HepG2 (cell line): ENCODE measurements at regions of chr20 and their contacts with region 1.

Region 1: DNA sequence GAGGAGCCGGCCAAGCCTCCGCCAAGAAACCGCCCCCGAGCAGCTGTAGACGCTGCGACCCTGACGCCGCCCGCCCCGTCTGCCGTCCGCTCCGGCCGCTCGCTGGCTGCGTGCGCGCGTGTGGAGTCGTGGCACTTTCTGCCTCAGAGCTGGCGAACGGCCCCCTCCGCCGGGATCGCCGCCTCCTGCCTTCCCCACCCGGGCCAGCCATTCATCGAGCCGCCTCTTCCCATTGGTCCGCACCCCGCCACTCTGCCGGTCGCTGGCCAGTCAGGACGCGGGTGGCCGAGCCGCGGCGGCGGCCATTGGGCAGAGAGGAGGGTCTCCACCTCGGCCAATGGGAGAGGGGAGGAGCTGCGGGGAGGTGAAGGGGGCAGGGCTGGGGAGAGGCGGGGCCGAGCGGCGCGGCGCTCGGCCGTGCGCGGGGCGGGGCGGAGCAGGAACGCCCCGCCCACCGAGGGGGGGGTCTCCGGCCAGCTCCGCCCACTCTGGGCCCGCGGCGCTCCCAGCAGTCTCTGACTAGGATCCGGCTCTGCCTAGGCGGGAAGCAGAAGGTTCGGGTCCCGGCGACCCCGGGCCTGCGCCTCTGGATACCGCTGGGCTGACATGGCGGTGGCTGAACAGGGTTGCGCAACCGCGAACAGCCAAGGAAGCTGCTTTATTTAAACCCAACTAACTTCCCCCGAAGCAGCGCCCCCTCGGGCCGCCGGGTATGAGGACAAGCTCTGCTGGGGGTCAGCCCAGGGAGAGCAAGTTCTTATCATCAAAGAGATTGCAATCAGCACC is at the start of gene RRBP1:
- DNase-seq: peak; percentile 98
- ATAC-seq: peak; percentile 90
- H3K4me3 ChIP-seq: peak within 1 kb of the TSS; percentile 87 to 92 (median 92)
- H3K27ac ChIP-seq: peak within 1 kb of the TSS; percentile 87
- H3K4me1 ChIP-seq: peaks cover 59% of the 10 kb centered on the region
- H3K27me3 ChIP-seq: peaks cover 0 to 18% of the 10 kb centered on the region in 2 experiments; a peak in 4 of 5 replicates
- CTCF ChIP-seq: peak; percentile 89
- EP300 ChIP-seq: peak; percentile 51 to 93
- POLR2A ChIP-seq: peak; percentile 98 to 99
- RAD21 ChIP-seq: peak; percentile 92
- total RNA-seq, gene RRBP1: 97.1 and 222 TPM in 2 replicates

Region 2: GRCh38 chr20:16729565-16730456 is 952.5 kb before region 1 on chr20 and contains the start of gene SNRPB2:
- CTCF ChIA-PET with region 1: no interaction called
- POLR2A ChIA-PET with region 1: no interaction called
- in situ Hi-C with region 1: no loop called
- intact Hi-C with region 1: no loop called
- DNase-seq: peak; percentile 97
- ATAC-seq: peak; percentile 98
- H3K4me3 ChIP-seq: peak within 1 kb of the TSS; percentile 82 to 98 (median 92)
- H3K27ac ChIP-seq: peak within 1 kb of the TSS; percentile 79
- H3K4me1 ChIP-seq: peaks cover 29% of the 10 kb centered on the region
- H3K27me3 ChIP-seq: peaks cover 0 to 12% of the 10 kb centered on the region in 2 experiments; a peak in 3 of 5 replicates
- CTCF ChIP-seq: peak; percentile 35
- EP300 ChIP-seq: peak; percentile 66 to 75; a peak in 3 of 4 replicates
- POLR2A ChIP-seq: peak; percentile 97 to 98
- RAD21 ChIP-seq: peak; percentile 74
- total RNA-seq, gene SNRPB2: 204 and 278 TPM in 2 replicates

Region 3: DNA sequence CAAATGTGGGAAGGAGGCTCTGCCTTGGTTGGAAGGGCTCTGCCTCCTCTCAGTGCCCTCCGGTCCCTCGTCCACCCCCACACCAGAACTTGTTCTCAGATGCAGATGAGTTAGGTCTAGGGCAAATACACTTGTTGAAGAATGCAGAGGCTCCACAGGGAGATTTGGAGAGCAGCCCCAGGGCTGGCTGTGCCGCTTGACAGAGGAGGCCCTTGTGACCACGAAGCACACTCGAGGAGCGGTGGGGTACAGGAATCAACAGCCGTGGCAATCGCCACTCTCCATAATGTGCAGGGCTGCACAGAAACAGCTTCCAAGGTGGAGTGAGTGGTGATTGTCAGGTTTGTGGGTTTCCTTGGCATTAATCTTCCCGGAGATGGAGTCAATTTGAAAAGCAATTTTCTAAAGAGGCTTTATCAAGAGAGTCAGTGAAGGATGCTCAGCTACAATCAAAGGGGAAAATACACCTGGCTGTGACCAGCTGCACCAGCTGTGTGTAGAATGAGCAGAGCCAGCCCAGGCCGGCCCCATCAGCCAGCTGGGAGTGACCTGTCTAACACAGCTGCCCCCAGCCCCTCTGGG is 210.6 kb before region 1 on chr20:
- CTCF ChIA-PET with region 1: no interaction called
- POLR2A ChIA-PET with region 1: no interaction called
- in situ Hi-C with region 1: no loop called
- intact Hi-C with region 1: no loop called
- DNase-seq: no peak
- ATAC-seq: peak; percentile 27
- H3K4me3 ChIP-seq: no peak overlapping the region
- H3K27ac ChIP-seq: no peak overlapping the region
- H3K4me1 ChIP-seq: no peaks in the 10 kb centered on the region
- H3K27me3 ChIP-seq: peaks cover 10 to 48% of the 10 kb centered on the region in 2 experiments; a peak in 4 of 5 replicates
- CTCF ChIP-seq: no peak
- EP300 ChIP-seq: no peak
- POLR2A ChIP-seq: no peak
- RAD21 ChIP-seq: no peak

Region 4: DNA sequence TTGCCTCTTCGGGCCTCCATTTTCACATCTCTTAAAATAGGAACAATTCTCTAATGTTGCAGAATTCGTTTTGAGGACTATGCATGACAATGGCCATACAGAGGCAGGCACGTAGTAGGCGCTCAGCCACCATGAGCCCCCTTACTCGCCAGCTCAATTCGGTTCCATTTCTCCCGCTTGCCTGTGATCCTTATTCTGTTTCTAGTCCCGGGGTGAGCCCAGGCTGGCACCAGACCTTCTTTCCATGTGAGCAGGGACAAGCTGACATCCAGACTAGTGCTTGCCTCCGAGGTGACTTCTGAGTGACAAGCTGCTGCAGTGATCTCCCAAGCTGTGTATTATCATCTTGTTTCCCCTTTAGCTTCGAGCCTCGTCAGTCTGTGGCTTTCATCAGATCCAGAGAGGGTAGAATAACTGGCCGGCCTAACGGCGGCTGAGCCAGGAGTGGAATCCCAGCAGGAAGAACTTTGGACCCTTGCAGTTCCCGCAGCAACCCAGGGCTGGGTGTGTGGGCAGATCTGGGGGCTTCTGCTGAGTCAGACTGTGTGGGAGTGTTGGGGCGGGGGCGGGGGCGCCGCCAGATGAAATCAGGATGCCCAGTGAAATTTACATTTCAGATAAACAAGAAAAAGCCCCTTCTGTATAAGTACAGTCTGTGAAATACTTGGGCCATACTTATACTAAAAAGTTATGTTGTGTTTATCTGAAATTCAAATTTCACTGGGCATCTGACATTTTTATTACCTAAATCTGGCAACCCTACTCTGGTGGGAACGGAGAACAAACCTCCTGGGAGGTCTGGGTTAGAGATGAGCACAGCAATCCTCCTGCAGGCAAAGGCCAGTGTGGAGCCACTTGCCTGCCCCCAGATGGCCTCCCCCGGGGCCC is 28.3 kb after region 1 on chr20:
- CTCF ChIA-PET with region 1: no interaction called
- POLR2A ChIA-PET with region 1: interaction called, 126 read pairs
- in situ Hi-C with region 1: no loop called
- intact Hi-C with region 1: loop called (anchors 1 kb)
- DNase-seq: peak; percentile 92
- ATAC-seq: peak; percentile 93
- H3K4me3 ChIP-seq: peak overlapping the region; percentile 36 to 70 (median 54)
- H3K27ac ChIP-seq: peak overlapping the region; percentile 43
- H3K4me1 ChIP-seq: peaks cover 75% of the 10 kb centered on the region
- H3K27me3 ChIP-seq: peaks cover 2 to 23% of the 10 kb centered on the region in 2 experiments; a peak in 2 of 5 replicates
- CTCF ChIP-seq: 0 out of 2 replicates have a peak, but pooled peaks have one; percentile 6
- EP300 ChIP-seq: peak in 1 of 2 experiments; percentile 66; a peak in 2 of 4 replicates
- POLR2A ChIP-seq: peak; percentile 59 to 61; a peak in 3 of 4 replicates
- RAD21 ChIP-seq: peak; percentile 31; the same call in 1 of the 2 replicates

Region 5: DNA sequence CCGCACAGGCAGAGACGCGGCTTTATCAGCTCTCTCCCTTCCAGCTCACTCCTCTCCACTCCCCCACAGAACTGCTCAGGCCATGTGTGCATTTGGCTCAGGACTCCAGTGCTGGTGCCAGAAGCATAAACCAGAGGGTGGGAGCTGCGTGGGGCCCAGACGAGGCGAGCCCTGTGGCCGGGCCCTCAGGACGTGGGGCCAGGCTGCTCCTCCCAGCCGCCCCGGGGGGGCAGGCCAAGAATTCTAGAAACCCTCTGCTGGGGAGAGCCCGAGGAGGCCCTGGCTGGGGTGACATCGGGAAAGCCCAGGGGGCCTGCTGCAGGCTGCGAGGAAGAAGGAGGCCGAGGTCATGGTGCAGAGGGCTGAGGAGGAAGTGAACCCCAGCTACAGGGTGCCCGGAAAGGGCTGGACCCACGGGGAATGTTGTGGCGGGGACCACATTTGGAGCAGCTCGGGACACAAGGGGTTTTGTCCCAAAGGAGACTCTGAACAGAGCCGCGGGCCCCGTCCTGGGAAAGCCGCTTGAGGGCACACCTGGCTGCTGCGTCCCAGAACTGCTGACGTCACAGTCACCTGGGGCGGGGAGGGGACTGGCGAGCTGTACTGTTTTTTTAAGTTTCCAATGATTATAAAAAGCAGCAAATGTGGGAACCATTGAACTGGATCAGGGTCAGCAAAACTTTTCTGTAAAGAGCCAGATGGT is 124.6 kb after region 1 on chr20:
- CTCF ChIA-PET with region 1: no interaction called
- POLR2A ChIA-PET with region 1: interaction called, 13 read pairs
- in situ Hi-C with region 1: no loop called
- intact Hi-C with region 1: loop called (anchors 5 kb)
- DNase-seq: no peak
- ATAC-seq: peak; percentile 24
- H3K4me3 ChIP-seq: peak overlapping the region in 2 of 3 experiments; percentile 16 to 49; a peak in 1 of 6 replicates
- H3K27ac ChIP-seq: no peak overlapping the region
- H3K4me1 ChIP-seq: peaks cover 83% of the 10 kb centered on the region
- H3K27me3 ChIP-seq: peaks cover 0 to 1% of the 10 kb centered on the region in 2 experiments; a peak in 2 of 5 replicates
- CTCF ChIP-seq: peak; percentile 54
- EP300 ChIP-seq: no peak
- POLR2A ChIP-seq: no peak
- RAD21 ChIP-seq: no peak

Region 6: DNA sequence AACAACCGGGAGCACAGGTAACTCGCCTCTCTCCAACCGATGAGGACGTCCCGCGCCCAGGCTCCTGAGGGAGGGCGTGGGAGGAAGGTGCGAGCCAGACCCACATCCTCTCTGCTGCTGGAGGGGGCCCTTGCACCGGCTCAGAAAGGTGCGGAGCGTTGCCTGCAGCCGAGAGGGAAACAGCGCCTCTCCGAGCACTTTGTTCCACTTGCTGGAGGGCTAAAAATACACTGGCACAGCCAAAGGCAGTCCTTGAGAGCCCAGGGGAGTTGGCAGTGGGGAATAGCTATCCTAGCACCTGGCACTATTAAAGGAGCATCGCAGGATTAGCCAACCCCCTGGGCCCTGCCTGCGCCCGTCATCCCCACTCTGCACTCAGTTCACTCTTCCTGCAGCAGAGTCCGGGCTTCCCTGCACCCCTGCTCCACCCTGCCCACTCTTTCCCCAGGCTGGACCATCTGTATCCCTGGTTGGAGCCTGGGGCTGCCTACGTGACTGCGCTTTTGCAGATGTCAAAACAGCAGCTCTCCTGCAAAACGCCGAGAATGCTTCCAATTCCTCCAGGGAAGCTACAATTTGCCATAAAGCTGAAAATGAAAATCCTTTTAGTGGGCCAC is 177.4 kb after region 1 on chr20:
- CTCF ChIA-PET with region 1: no interaction called
- POLR2A ChIA-PET with region 1: interaction called, 347 read pairs
- in situ Hi-C with region 1: no loop called
- intact Hi-C with region 1: loop called (anchors 1 kb)
- DNase-seq: no peak
- ATAC-seq: no peak; the same call in 1 of the 3 replicates
- H3K4me3 ChIP-seq: peak overlapping the region in 1 of 3 experiments; percentile 17; a peak in 2 of 6 replicates
- H3K27ac ChIP-seq: peak overlapping the region; percentile 86
- H3K4me1 ChIP-seq: peaks cover 100% of the 10 kb centered on the region
- H3K27me3 ChIP-seq: no peaks in the 10 kb centered on the region
- CTCF ChIP-seq: peak; percentile 53
- EP300 ChIP-seq: no peak
- POLR2A ChIP-seq: no peak
- RAD21 ChIP-seq: peak; percentile 34; the same call in 1 of the 2 replicates

Region 7: DNA sequence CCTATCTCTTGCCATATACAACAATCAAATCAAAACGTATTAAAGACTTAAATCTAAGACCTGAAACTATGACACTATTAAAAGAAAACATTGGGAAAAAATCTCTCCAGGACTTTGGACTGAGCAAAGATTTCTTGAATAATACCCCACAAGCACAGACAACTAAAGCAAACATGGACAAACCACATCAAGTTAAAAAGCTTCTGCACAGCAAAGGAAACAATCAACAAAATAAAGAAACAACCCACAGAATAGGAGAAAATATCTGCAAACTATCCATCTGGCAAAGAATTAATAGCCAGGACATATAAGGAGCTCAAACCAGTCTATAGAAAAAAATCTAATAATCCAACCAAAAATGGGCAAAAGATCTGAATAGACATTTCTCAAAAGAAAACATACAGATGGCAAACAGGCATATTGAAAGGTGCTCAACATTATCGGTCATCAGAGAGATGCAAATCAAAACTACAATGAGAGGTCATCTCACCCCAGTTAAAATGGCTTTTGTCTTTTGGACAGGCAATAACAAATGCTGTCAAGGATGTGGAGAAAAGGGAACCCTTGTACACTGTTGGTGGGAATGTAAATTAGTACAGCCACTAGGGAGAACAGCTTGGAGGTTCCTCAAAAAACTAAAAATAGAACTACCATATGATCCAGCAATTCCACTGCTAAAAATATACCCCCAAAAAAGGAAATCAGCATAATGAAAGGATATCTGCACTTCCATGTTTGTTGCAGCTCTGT is 210.1 kb after region 1 on chr20:
- CTCF ChIA-PET with region 1: interaction called, 29 read pairs
- POLR2A ChIA-PET with region 1: interaction called, 80 read pairs
- in situ Hi-C with region 1: no loop called
- intact Hi-C with region 1: loop called (anchors 1 kb)
- DNase-seq: peak; percentile 76
- ATAC-seq: no peak
- H3K4me3 ChIP-seq: peak overlapping the region in 1 of 3 experiments; percentile 2; a peak in 2 of 6 replicates
- H3K27ac ChIP-seq: no peak overlapping the region
- H3K4me1 ChIP-seq: peaks cover 79% of the 10 kb centered on the region
- H3K27me3 ChIP-seq: no peaks in the 10 kb centered on the region
- CTCF ChIP-seq: no peak
- EP300 ChIP-seq: peak in 1 of 2 experiments; percentile 86; a peak in 2 of 4 replicates
- POLR2A ChIP-seq: no peak
- RAD21 ChIP-seq: no peak

Region 8: GRCh38 chr20:18287915-18288748 is 605.8 kb after region 1 on chr20 and contains the start of gene ZNF133:
- CTCF ChIA-PET with region 1: no interaction called
- POLR2A ChIA-PET with region 1: interaction called, 10 read pairs
- in situ Hi-C with region 1: no loop called
- intact Hi-C with region 1: no loop called
- DNase-seq: peak; percentile 96
- ATAC-seq: peak; percentile 98
- H3K4me3 ChIP-seq: peak within 1 kb of the TSS; percentile 76 to 93 (median 85)
- H3K27ac ChIP-seq: peak within 1 kb of the TSS; percentile 87
- H3K4me1 ChIP-seq: peaks cover 20% of the 10 kb centered on the region
- H3K27me3 ChIP-seq: no peaks in the 10 kb centered on the region; a peak in 1 of 5 replicates
- CTCF ChIP-seq: peak; percentile 75
- EP300 ChIP-seq: peak; percentile 11 to 23; a peak in 1 of 4 replicates
- POLR2A ChIP-seq: peak; percentile 97
- RAD21 ChIP-seq: peak; percentile 48; the same call in 1 of the 2 replicates
- total RNA-seq, gene ZNF133: 25.9 and 26.7 TPM in 2 replicates